CD4-positive, alpha-beta T cell (primary cell): ENCODE measurements at regions of chr16 and their contacts with region 1.

Region 1: DNA sequence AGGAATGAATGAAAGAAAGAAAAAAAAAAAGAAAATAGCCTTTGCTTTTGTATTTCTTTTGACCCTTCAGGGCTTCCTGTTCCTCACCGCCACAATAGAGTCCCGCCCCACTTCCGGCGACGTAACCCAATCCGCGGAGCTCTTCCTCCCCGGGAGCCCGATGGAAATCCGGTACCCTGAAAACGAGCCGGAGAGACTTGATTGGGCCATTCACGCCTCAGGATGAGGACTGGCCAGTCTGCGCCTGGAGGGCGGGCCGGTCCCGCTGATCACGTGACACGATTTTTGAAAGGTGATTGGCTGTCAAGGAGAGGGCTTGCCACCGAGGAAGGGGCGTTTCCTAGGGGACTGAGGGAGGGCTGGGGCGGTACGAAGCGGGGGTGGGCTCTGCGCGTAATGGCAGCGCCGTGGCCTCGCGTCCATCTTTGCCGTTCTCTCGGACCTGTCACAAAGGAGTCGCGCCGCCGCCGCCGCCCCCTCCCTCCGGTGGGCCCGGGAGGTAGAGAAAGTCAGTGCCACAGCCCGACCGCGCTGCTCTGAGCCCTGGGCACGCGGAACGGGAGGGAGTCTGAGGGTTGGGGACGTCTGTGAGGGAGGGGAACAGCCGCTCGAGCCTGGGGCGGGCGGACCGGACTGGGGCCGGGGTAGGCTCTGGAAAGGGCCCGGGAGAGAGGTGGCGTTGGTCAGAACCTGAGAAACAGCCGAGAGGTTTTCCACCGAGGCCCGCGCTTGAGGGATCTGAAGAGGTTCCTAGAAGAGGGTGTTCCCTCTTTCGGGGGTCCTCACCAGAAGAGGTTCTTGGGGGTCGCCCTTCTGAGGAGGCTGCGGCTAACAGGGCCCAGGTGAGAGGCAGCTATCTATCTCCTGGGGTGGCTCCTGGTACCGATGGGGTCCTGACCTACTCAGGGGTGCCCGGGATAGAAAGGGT is at the starts of genes PSME3IP1 and RSPRY1:
- DNase-seq: peak; percentile 95 to 100 (median 98)
- ATAC-seq: peak; percentile 89
- H3K4me3 ChIP-seq: peak within 1 kb of the TSS; percentile 96
- H3K4me3 Mint-ChIP-seq: peak within 1 kb of the TSS; percentile 94
- H3K27ac ChIP-seq: peak within 1 kb of the TSS; percentile 92
- H3K27ac Mint-ChIP-seq: peak within 1 kb of the TSS; percentile 90
- H3K4me1 ChIP-seq: peaks cover 25% of the 10 kb centered on the region
- H3K4me1 Mint-ChIP-seq: peaks cover 50% of the 10 kb centered on the region
- H3K27me3 ChIP-seq: no peaks in the 10 kb centered on the region
- H3K27me3 Mint-ChIP-seq: no peaks in the 10 kb centered on the region
- CTCF ChIP-seq: no peak
- total RNA-seq, gene PSME3IP1: 77.1 to 77.9 TPM
- total RNA-seq, gene RSPRY1: 19.9 to 21.3 TPM

Region 2: DNA sequence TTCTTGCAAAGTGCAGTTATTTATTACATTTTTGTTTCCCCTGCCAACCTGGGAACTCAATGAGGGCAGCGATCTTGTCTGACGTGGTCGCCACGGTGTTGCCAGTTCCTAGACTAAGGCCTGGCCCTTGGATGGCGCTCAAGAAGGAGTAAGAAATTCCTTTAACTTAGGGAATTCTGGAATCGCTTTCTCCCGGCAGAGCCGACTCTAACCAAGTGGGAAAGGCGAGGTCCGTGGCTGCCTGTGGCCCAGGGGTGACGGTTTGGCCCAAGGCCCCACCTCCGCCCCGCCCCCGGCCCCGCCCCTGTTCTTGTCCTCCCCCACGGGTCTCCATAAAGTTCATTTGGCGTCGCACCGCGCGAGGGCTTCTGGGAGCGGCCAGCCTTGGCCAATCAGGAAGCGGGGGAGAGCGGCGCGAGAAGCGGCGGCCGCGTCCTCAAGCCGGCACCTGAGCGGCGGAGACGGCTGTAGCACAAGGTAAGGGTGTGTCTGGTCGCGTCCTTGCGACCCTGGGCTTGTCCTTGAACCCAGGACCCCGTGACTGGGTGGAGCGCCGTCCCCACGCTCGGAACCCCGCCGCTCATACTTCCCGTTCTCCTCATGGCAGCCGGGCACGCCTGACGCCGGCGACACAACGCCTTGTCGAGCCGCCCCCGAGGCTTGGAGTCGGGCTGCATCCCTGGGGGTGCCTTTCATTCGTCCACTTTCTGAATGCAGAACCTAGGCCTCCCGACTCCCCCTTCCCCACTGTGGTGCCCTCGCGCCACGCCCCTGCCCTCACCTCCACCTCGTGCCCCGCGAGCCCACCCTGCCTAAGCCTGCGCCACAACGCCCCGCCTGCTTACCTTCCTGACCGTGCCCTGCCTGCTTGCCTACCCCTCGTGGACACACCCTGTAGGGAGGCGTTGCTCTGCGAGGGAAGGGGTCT is 456.2 kb before region 1 on chr16 and contains the start of gene NUP93:
- CTCF ChIA-PET with region 1: no interaction called
- POLR2A ChIA-PET with region 1: no interaction called
- intact Hi-C with region 1: loop called in 1 of 2 experiments (anchors 5 kb)
- DNase-seq: peak; percentile 81 to 96 (median 87)
- ATAC-seq: peak; percentile 93
- H3K4me3 ChIP-seq: peak within 1 kb of the TSS; percentile 99
- H3K4me3 Mint-ChIP-seq: no peak within 1 kb of the TSS
- H3K27ac ChIP-seq: peak within 1 kb of the TSS; percentile 44 to 57
- H3K27ac Mint-ChIP-seq: peak within 1 kb of the TSS; percentile 93
- H3K4me1 ChIP-seq: peaks cover 26% of the 10 kb centered on the region
- H3K4me1 Mint-ChIP-seq: peaks cover 34% of the 10 kb centered on the region
- H3K27me3 ChIP-seq: no peaks in the 10 kb centered on the region
- H3K27me3 Mint-ChIP-seq: no peaks in the 10 kb centered on the region
- CTCF ChIP-seq: no peak
- total RNA-seq, gene NUP93: 45.6 to 47.2 TPM

Region 3: DNA sequence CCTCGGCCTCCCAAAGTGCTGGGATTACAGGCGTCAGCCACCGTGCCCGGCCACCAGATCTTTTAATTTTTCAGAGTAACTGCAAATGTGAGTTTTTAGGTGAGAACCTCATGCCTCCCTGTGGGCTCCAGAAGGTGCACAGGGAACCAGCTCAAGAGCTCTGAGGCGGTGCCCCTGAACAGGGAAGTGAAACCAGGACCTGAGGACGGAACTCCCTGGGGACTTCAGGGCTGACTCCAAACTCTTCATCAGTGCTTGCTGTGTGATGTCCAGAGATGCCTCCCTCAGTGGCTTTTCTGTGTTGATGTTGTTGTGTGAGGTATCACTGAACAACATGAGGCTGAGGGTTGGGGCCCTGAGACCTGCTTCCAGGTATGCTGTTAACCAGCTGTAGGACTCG is 297.4 kb before region 1 on chr16:
- CTCF ChIA-PET with region 1: no interaction called
- POLR2A ChIA-PET with region 1: no interaction called
- intact Hi-C with region 1: no loop called
- DNase-seq: peak in 2 of 14 experiments; percentile 47 to 52
- ATAC-seq: no peak
- H3K4me3 ChIP-seq: no peak overlapping the region
- H3K4me3 Mint-ChIP-seq: no peak overlapping the region
- H3K27ac ChIP-seq: no peak overlapping the region
- H3K27ac Mint-ChIP-seq: no peak overlapping the region
- H3K4me1 ChIP-seq: no peaks in the 10 kb centered on the region
- H3K4me1 Mint-ChIP-seq: no peaks in the 10 kb centered on the region
- H3K27me3 ChIP-seq: no peaks in the 10 kb centered on the region
- H3K27me3 Mint-ChIP-seq: no peaks in the 10 kb centered on the region
- CTCF ChIP-seq: no peak

Region 4: GRCh38 chr16:56898847-56899246 is 287.4 kb before region 1 on chr16:
- CTCF ChIA-PET with region 1: no interaction called
- POLR2A ChIA-PET with region 1: no interaction called
- intact Hi-C with region 1: no loop called
- DNase-seq: peak in 3 of 14 experiments; percentile 11 to 35 (median 28)
- ATAC-seq: no peak
- H3K4me3 ChIP-seq: no peak overlapping the region
- H3K4me3 Mint-ChIP-seq: no peak overlapping the region
- H3K27ac ChIP-seq: no peak overlapping the region
- H3K27ac Mint-ChIP-seq: no peak overlapping the region
- H3K4me1 ChIP-seq: peaks cover 13% of the 10 kb centered on the region
- H3K4me1 Mint-ChIP-seq: peaks cover 18% of the 10 kb centered on the region
- H3K27me3 ChIP-seq: no peaks in the 10 kb centered on the region
- H3K27me3 Mint-ChIP-seq: no peaks in the 10 kb centered on the region
- CTCF ChIP-seq: no peak

Region 5: DNA sequence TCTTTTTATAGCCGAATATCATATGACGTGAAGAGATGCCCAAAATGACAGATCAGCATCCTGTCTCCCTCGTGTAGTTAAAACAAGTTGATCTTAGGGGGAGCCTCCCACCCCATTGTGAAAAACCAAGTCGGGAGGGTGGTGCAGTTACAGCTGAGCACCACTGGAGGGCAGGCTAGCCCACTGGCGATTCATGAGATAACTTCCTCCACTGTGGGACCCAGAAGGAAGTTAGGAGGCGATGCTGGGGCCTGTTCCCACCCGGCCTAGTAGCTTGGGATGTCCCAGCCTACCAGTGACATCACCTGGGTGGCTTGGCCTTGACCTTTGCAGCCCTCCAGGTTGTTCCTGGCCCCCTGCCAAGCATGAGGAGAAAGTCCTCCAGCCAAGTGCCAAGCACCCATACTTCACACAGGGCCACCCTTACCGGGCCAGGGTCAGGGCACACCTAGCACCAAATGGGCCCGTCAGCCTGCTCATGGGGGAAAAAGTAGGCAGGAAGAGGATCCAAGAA is 101.9 kb before region 1 on chr16:
- CTCF ChIA-PET with region 1: interaction called, 7 read pairs
- POLR2A ChIA-PET with region 1: interaction called, 14 read pairs
- intact Hi-C with region 1: no loop called
- DNase-seq: peak; percentile 56 to 90 (median 70)
- ATAC-seq: peak; percentile 96
- H3K4me3 ChIP-seq: no peak overlapping the region
- H3K4me3 Mint-ChIP-seq: no peak overlapping the region
- H3K27ac ChIP-seq: peak overlapping the region; percentile 43 to 57
- H3K27ac Mint-ChIP-seq: peak overlapping the region; percentile 84
- H3K4me1 ChIP-seq: peaks cover 11% of the 10 kb centered on the region
- H3K4me1 Mint-ChIP-seq: peaks cover 12% of the 10 kb centered on the region
- H3K27me3 ChIP-seq: no peaks in the 10 kb centered on the region
- H3K27me3 Mint-ChIP-seq: no peaks in the 10 kb centered on the region
- CTCF ChIP-seq: peak; percentile 92

Region 6: GRCh38 chr16:57128771-57129389 is 57.3 kb before region 1 on chr16:
- CTCF ChIA-PET with region 1: no interaction called
- POLR2A ChIA-PET with region 1: interaction called, 11 read pairs
- intact Hi-C with region 1: no loop called
- DNase-seq: peak in 13 of 14 experiments; percentile 22 to 77 (median 44)
- ATAC-seq: peak; percentile 83
- H3K4me3 ChIP-seq: no peak overlapping the region
- H3K4me3 Mint-ChIP-seq: peak overlapping the region; percentile 77
- H3K27ac ChIP-seq: peak overlapping the region in 1 of 2 donors; percentile 22
- H3K27ac Mint-ChIP-seq: peak overlapping the region; percentile 88
- H3K4me1 ChIP-seq: peaks cover 92% of the 10 kb centered on the region
- H3K4me1 Mint-ChIP-seq: peaks cover 96% of the 10 kb centered on the region
- H3K27me3 ChIP-seq: no peaks in the 10 kb centered on the region
- H3K27me3 Mint-ChIP-seq: no peaks in the 10 kb centered on the region
- CTCF ChIP-seq: no peak

Region 7: GRCh38 chr16:57167953-57168352 is 18.3 kb before region 1 on chr16:
- CTCF ChIA-PET with region 1: no interaction called
- POLR2A ChIA-PET with region 1: no interaction called
- intact Hi-C with region 1: no loop called
- DNase-seq: peak in 4 of 14 experiments; percentile 24 to 84 (median 80)
- ATAC-seq: peak; percentile 98
- H3K4me3 ChIP-seq: no peak overlapping the region
- H3K4me3 Mint-ChIP-seq: no peak overlapping the region
- H3K27ac ChIP-seq: no peak overlapping the region
- H3K27ac Mint-ChIP-seq: no peak overlapping the region
- H3K4me1 ChIP-seq: peaks cover 5% of the 10 kb centered on the region
- H3K4me1 Mint-ChIP-seq: peaks cover 27% of the 10 kb centered on the region
- H3K27me3 ChIP-seq: no peaks in the 10 kb centered on the region
- H3K27me3 Mint-ChIP-seq: no peaks in the 10 kb centered on the region
- CTCF ChIP-seq: peak; percentile 75

Region 8: GRCh38 chr16:57265850-57266530 is 79.8 kb after region 1 on chr16:
- CTCF ChIA-PET with region 1: no interaction called
- POLR2A ChIA-PET with region 1: no interaction called
- intact Hi-C with region 1: loop called in 1 of 2 experiments (anchors 2 kb)
- DNase-seq: no peak
- ATAC-seq: no peak
- H3K4me3 ChIP-seq: no peak overlapping the region
- H3K4me3 Mint-ChIP-seq: peak overlapping the region; percentile 43
- H3K27ac ChIP-seq: peak overlapping the region in 1 of 2 donors; percentile 57
- H3K27ac Mint-ChIP-seq: peak overlapping the region; percentile 97
- H3K4me1 ChIP-seq: peaks cover 55% of the 10 kb centered on the region
- H3K4me1 Mint-ChIP-seq: peaks cover 53% of the 10 kb centered on the region
- H3K27me3 ChIP-seq: no peaks in the 10 kb centered on the region
- H3K27me3 Mint-ChIP-seq: no peaks in the 10 kb centered on the region
- CTCF ChIP-seq: no peak

Region 9: GRCh38 chr16:57447186-57447962 is 261.2 kb after region 1 on chr16 and contains the starts of genes CIAPIN1 and COQ9:
- CTCF ChIA-PET with region 1: no interaction called
- POLR2A ChIA-PET with region 1: interaction called, 8 read pairs
- intact Hi-C with region 1: loop called in 1 of 2 experiments (anchors 5 kb)
- DNase-seq: peak; percentile 83 to 97 (median 92)
- ATAC-seq: peak; percentile 99
- H3K4me3 ChIP-seq: peak within 1 kb of the TSS; percentile 96
- H3K4me3 Mint-ChIP-seq: peak within 1 kb of the TSS; percentile 96
- H3K27ac ChIP-seq: peak within 1 kb of the TSS; percentile 73 to 79
- H3K27ac Mint-ChIP-seq: peak within 1 kb of the TSS; percentile 88
- H3K4me1 ChIP-seq: peaks cover 29% of the 10 kb centered on the region
- H3K4me1 Mint-ChIP-seq: peaks cover 34% of the 10 kb centered on the region
- H3K27me3 ChIP-seq: no peaks in the 10 kb centered on the region
- H3K27me3 Mint-ChIP-seq: no peaks in the 10 kb centered on the region
- CTCF ChIP-seq: no peak
- total RNA-seq, gene CIAPIN1: 27.8 to 28.0 TPM
- total RNA-seq, gene COQ9: 7.0 to 7.6 TPM

Region 10: GRCh38 chr16:57535680-57536305 is 349.6 kb after region 1 on chr16:
- CTCF ChIA-PET with region 1: no interaction called
- POLR2A ChIA-PET with region 1: interaction called, 10 read pairs
- intact Hi-C with region 1: no loop called
- DNase-seq: peak; percentile 87 to 98 (median 91)
- ATAC-seq: peak; percentile 85
- H3K4me3 ChIP-seq: peak overlapping the region; percentile 59
- H3K4me3 Mint-ChIP-seq: peak overlapping the region; percentile 89
- H3K27ac ChIP-seq: peak overlapping the region; percentile 94
- H3K27ac Mint-ChIP-seq: peak overlapping the region; percentile 96
- H3K4me1 ChIP-seq: peaks cover 79% of the 10 kb centered on the region
- H3K4me1 Mint-ChIP-seq: peaks cover 78% of the 10 kb centered on the region
- H3K27me3 ChIP-seq: no peaks in the 10 kb centered on the region
- H3K27me3 Mint-ChIP-seq: no peaks in the 10 kb centered on the region
- CTCF ChIP-seq: no peak